Mammary epithelial cell (primary cell): ENCODE measurements at regions of chr11 and their contacts with region 1.

Region 1: GRCh38 chr11:123110356-123110755 is 48.4 kb upstream of the HSPA8 start:
- DNase-seq: no peak
- H3K4me3 ChIP-seq: no peak overlapping the region
- H3K27ac ChIP-seq: no peak overlapping the region
- H3K4me1 ChIP-seq: peaks cover 7% of the 10 kb centered on the region
- H3K27me3 ChIP-seq: no peaks in the 10 kb centered on the region
- CTCF ChIP-seq: no peak

Region 2: GRCh38 chr11:123166071-123166559 is 55.8 kb after region 1 on chr11:
- CTCF ChIA-PET with region 1: no interaction called
- dilution Hi-C with region 1: no loop called
- in situ Hi-C with region 1: no loop called
- intact Hi-C with region 1: loop called (anchors 1 kb)
- DNase-seq: peak; percentile 66
- H3K4me3 ChIP-seq: no peak overlapping the region
- H3K27ac ChIP-seq: peak overlapping the region; percentile 45
- H3K4me1 ChIP-seq: peaks cover 15% of the 10 kb centered on the region
- H3K27me3 ChIP-seq: no peaks in the 10 kb centered on the region
- CTCF ChIP-seq: peak; percentile 87 to 88

Region 3: DNA sequence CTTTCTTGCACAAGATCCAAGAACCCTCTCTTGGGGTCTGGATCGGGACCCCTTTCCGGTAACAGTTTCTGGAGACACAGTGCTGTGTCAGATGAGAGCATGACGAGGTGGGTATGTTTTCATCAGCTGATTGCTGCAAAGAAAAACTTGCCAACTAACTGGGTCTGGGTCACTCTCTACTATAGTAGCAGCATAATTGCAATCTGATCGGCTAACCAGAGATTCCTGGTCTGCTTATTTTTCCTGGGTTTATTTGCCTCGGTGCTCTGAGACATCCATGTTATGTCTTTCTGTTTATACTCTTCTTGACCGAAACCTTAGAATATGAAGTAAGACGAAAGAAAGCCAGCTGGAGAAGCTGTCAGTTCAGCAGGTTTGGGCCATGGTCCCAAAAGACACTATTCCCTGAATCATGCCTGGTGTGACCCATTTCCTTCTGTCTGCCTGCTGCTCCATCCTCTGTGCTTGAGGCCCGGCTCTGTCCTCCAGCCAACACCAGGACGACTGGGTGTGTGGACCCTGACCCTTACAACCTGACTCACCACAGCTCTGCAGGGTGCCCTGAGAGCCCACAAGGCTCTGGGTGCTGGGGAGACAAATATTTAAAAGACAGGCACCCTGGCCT is 108.8 kb after region 1 on chr11:
- CTCF ChIA-PET with region 1: no interaction called
- dilution Hi-C with region 1: no loop called
- in situ Hi-C with region 1: no loop called
- intact Hi-C with region 1: no loop called
- DNase-seq: no peak
- H3K4me3 ChIP-seq: no peak overlapping the region
- H3K27ac ChIP-seq: no peak overlapping the region
- H3K4me1 ChIP-seq: peaks cover 6% of the 10 kb centered on the region
- H3K27me3 ChIP-seq: no peaks in the 10 kb centered on the region
- CTCF ChIP-seq: no peak

Region 4: GRCh38 chr11:123235117-123235655 is 124.8 kb after region 1 on chr11:
- CTCF ChIA-PET with region 1: no interaction called
- dilution Hi-C with region 1: loop called (anchors 5 kb)
- in situ Hi-C with region 1: no loop called
- intact Hi-C with region 1: no loop called
- DNase-seq: no peak
- H3K4me3 ChIP-seq: no peak overlapping the region
- H3K27ac ChIP-seq: no peak overlapping the region
- H3K4me1 ChIP-seq: peaks cover 6% of the 10 kb centered on the region
- H3K27me3 ChIP-seq: no peaks in the 10 kb centered on the region
- CTCF ChIP-seq: peak; percentile 50 to 52

Region 5: GRCh38 chr11:123261345-123262106 is 151.2 kb after region 1 on chr11:
- CTCF ChIA-PET with region 1: interaction called, 3 read pairs
- dilution Hi-C with region 1: no loop called
- in situ Hi-C with region 1: no loop called
- intact Hi-C with region 1: loop called (anchors 1 kb)
- DNase-seq: peak; percentile 71
- H3K4me3 ChIP-seq: no peak overlapping the region
- H3K27ac ChIP-seq: no peak overlapping the region
- H3K4me1 ChIP-seq: peaks cover 6% of the 10 kb centered on the region
- H3K27me3 ChIP-seq: no peaks in the 10 kb centered on the region
- CTCF ChIP-seq: peak; percentile 89